ENCODE measurements at regions of chr15 and their contacts with region 1.

Region 1: DNA sequence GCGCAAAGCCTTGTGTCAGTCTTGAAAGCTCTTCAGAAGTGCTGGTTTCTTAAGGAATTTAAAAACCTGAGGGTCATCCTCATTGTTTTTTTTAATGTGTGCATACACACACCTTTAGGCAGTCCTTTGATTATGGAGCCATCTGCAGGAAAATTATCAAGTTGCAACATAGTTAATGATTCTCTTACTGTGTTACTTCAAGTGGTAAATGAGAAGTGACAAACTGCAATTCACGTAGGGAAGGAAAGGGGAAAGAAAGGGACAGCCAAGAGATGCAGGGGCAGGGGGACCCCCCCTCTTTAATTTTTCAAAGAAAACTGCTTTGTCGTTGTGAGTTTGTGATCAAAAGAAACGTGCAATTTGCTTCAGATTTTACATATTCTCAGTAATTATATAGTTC is 162.4 kb upstream of the CGNL1 start:
- DNase-seq: no peak
- H3K4me3 ChIP-seq: no peak overlapping the region
- H3K27me3 ChIP-seq: no peaks in the 10 kb centered on the region
- CTCF ChIP-seq: peak; percentile 41

Region 2: GRCh38 chr15:57146506-57147201 is 67.2 kb before region 1 on chr15:
- CTCF ChIA-PET with region 1: interaction called, 50 read pairs
- POLR2A ChIA-PET with region 1: no interaction called
- DNase-seq: no peak
- H3K4me3 ChIP-seq: no peak overlapping the region
- H3K27me3 ChIP-seq: no peaks in the 10 kb centered on the region
- CTCF ChIP-seq: peak; percentile 69

Region 3: GRCh38 chr15:57158589-57158988 is 55.3 kb before region 1 on chr15:
- CTCF ChIA-PET with region 1: interaction called, 10 read pairs
- POLR2A ChIA-PET with region 1: no interaction called
- DNase-seq: no peak
- H3K4me3 ChIP-seq: no peak overlapping the region
- H3K27me3 ChIP-seq: no peaks in the 10 kb centered on the region
- CTCF ChIP-seq: no peak

Region 4: DNA sequence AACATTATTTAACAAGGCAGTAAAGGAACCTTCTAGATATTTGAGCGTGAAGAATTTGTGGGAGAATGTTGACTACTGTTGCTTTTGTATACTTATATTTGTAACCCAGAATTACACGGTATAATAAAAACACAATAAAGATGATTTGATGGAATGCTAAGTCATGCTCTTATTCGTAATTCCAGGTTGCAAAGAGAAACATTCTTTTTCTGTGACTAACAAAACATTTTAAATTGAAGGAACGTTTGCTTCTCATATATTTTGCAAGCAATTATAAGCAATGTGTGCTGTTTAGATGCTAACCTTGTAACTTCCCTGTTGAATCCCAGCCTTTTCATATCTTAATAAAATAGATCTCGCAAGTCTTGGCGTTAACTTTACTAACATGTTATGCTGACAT is 38.1 kb after region 1 on chr15:
- CTCF ChIA-PET with region 1: no interaction called
- POLR2A ChIA-PET with region 1: no interaction called
- DNase-seq: peak; percentile 60
- H3K4me3 ChIP-seq: no peak overlapping the region
- H3K27me3 ChIP-seq: no peaks in the 10 kb centered on the region
- CTCF ChIP-seq: no peak

Region 5: GRCh38 chr15:57263520-57263919 is 49.7 kb after region 1 on chr15:
- CTCF ChIA-PET with region 1: no interaction called
- POLR2A ChIA-PET with region 1: interaction called, 11 read pairs
- DNase-seq: no peak
- H3K4me3 ChIP-seq: no peak overlapping the region
- H3K27me3 ChIP-seq: no peaks in the 10 kb centered on the region
- CTCF ChIP-seq: no peak

Measured in BJ (cell line).